Left colon (tissue), 2 donors: ENCODE measurements at regions of chr4 and their contacts with region 1.

Region 1: GRCh38 chr4:97394653-97395052 is 748.6 kb downstream of the STPG2 start:
- DNase-seq: no peak
- ATAC-seq: no peak

Region 2: DNA sequence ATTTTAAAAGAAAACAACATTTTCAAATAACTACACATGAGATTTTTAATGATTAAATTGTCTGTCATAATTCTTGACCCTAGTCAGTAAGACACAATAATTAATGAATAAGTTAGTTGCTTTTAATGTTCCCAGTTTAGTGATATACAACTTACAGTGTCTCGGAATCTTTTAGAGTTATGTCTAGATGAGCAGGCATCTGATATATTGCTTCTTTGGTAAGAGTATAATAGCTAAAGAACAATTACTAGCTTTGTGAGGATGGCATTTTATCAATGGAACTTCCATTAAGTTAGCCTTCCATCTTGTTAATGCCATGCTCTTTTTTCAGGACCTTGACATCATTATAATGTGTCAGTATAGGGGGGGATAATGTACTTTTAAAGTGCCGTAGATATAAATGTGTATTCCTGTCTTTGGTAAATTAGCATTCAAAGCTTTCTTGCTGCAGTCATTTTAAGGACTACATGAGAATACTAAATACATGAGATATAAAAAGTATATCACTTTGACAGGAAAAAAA is 1129.7 kb before region 1 on chr4:
- intact Hi-C with region 1: loop called in 1 of 2 experiments (anchors 10 kb)
- DNase-seq: no peak
- ATAC-seq: no peak